Right ventricle myocardium superior (tissue), 1 donor: ENCODE measurements at regions of chr11 and their contacts with region 1.

Region 1: DNA sequence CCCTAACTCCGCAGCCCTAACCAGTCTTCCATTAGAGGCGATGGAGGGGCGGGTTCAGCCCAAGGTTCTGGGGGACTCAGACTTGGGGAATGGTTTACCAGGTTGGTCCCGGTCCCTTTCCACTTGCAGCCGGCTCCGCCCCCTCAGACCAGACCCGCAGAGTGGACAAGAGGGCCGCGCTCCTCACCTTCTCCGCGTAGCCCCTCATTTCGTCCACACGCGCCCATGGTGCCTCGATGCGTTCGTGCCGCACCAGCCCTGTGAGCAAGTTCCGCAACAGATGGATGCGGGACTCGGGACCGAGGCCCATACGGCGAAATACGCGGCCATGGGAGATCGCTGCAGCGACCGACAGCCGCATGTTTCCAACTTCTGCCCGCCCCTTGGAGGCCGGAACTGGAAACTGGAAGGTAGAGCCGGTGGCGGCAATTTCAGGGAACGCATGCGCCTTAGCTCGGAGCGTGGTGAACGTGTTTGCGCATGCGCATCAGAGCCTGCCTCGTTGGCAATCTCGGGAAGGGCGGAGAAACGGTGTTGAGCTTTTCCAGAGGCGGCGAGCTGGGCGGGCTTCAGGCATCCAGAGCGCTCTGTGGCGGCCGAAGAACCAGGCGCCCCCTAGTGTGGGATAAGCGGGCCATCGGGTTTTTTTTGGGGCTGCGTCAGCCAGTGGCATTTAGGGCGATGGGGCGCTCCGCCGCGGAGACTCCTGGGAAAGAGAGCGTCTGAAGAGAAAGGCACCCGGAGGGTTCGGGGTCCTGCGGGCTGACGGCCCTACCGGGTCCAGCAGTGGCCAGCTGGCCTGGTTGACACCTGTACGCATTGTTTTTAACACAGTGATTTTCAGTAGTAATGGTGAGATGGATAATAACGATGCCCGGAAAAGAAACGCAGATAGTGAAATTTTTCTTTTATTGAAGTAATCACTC is at the start of gene MRPL17:
- DNase-seq: peak; percentile 99
- ATAC-seq: peak; percentile 98
- total RNA-seq, gene MRPL17: 46.5 TPM

Region 2: DNA sequence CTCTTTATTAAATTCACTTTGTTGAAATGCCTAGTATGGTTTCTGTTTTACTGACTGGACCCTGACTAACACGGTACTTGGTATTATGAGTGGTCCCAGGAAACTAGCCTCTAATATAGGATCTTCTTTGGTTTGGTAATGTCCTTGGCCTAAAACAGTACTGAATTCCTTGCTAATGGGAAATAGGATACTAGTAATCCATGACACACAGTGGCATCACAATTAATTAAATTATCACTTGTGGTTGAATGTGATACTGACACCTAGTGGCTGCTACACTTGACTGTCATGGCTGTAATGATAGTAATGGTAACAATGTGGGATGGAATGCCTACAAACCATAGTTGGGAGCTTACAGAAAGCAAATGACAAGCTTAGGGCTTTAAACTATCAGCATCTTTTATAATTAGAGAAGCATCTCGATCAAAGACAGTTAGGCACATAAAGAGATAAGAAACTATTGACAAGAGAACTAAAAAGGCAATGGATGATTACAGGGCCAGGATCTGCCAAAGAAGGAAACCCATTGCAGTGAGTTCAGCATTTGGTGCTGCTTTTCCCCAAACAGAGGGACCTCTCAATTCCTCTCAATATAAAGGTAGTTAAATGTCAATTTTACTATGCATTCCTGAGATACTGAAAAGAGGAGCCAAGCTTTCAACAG is 177.5 kb before region 1 on chr11:
- intact Hi-C with region 1: no loop called
- DNase-seq: no peak
- ATAC-seq: peak; percentile 68

Region 3: DNA sequence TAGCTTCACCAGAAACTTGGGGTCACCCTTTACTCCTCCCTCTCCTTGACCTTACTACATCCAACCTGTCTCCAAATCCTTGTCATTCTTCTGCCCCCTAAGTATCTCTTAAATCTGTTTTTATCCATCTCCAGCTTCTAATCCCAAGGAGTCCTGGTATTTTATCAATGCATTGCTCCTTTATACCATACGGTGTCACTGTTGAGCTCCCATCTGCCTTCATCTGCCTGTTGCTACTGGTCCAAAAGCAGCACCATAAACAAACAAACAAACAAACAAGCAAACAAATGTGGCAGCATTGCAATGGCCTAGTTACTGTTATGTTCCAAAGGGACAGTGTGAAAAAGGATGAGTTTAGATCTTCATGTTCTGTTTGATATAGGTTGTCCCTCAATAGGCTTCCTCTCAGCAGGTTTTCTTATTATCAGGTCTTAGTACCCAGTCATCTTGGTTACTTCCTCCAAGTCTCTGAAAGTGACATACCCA is 151.9 kb before region 1 on chr11:
- intact Hi-C with region 1: loop called (anchors 5 kb)
- DNase-seq: no peak
- ATAC-seq: peak; percentile 90

Region 4: GRCh38 chr11:6556139-6556949 is 126.9 kb before region 1 on chr11:
- intact Hi-C with region 1: no loop called
- DNase-seq: no peak
- ATAC-seq: peak; percentile 6

Region 5: DNA sequence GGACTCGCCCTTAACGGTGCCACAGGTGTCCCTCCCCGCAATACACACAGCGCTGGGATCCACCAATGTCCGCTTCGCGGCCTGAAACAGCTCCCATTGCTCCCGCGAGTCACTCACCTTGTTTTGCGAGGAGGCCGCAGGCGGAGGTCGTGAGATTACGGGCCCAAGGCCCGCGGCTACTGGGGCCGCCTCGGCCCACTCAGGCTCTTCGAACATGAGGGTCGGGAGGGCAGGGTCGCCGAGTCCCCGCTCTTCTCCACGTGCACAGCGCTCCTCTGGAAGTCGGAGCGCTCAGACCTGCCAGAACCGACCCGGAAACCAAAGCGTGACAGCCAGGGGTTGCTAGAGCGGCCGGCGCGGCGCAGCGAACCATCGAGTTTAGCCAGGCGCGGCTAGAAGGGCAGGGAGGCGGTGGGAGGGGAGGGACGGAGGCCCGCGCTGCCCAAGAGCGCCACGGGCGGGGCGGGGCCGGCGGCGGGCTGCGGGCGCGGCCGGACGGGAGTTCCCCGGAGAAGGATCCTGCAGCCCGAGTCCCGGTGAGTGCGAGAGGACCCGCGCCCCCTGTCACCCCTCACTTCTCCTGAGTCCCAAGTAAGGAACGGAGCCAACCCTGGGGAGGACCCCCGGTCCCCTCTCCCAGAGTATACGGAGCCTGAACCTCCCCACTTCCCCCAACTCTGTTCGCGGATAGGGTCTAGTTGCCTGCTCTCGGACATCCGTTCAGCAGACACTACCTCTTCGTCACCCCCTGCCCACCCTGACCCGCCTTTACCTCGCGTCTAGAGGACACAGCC is 79.7 kb before region 1 on chr11 and contains the starts of genes ILK and RRP8:
- intact Hi-C with region 1: loop called (anchors 5 kb)
- DNase-seq: peak; percentile 96
- ATAC-seq: peak; percentile 93
- total RNA-seq, gene ILK: 191 TPM
- total RNA-seq, gene RRP8: 19.8 TPM

Region 6: GRCh38 chr11:6719576-6719975 is 36.4 kb after region 1 on chr11:
- intact Hi-C with region 1: no loop called
- DNase-seq: no peak
- ATAC-seq: peak; percentile 38